ENCODE measurements at regions of chr14 and their contacts with region 1.

Region 1: GRCh38 chr14:60266021-60266937 is 17.3 kb downstream of the PPM1A start:
- DNase-seq: peak; percentile 14
- H3K4me3 Mint-ChIP-seq: no peak overlapping the region
- H3K27ac Mint-ChIP-seq: no peak overlapping the region
- H3K4me1 Mint-ChIP-seq: peaks cover 9% of the 10 kb centered on the region
- H3K27me3 Mint-ChIP-seq: no peaks in the 10 kb centered on the region

Region 2: DNA sequence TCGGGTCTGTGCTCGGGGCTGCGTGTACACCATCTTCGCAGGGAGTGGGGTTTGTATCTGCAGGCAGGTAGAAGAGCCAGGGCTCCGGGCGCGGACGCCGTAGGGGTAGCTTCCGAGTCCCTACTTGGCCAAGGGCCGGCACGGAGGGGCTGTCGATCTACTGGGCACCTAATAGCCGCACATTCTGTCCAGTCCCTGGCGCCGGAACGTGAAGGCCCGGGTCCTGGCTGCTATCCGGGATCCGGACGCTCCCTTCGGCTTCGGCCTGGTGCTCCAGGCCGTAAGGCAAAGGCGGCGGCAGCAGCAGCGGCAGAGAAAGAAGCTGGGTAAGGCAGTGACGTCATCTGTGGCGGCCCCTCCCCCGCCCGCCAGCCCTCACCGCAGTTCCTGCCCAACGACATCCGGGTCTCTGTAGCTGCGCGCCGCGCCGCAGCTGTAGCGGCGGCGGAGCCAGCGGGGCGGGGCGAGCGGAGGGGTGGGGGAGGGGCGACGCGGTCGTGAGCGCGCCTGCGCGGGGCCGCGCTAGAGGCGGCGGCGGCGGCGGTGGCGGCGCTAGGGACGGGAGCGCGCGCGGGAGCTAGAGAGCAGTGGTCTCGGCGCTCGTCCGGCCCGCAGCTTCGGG is 17.5 kb before region 1 on chr14 and contains the start of gene PPM1A:
- CTCF ChIA-PET with region 1: no interaction called
- POLR2A ChIA-PET with region 1: interaction called, 17 read pairs
- DNase-seq: peak; percentile 93
- H3K4me3 Mint-ChIP-seq: peak within 1 kb of the TSS; percentile 90
- H3K27ac Mint-ChIP-seq: peak within 1 kb of the TSS; percentile 100
- H3K4me1 Mint-ChIP-seq: peaks cover 51% of the 10 kb centered on the region
- H3K27me3 Mint-ChIP-seq: no peaks in the 10 kb centered on the region
- total RNA-seq, gene PPM1A: 48.9 to 53.1 TPM

Measured in activated CD4-positive, alpha-beta T cell treated with anti-CD3 and anti-CD28 coated beads, Interleukin-2, amount 10 ng/mL, durations not matched to agents 7 days and 5 days (primary cell).